Cardiac septum (tissue), 1 donor: ENCODE measurements at regions of chr1 and their contacts with region 1.

Region 1: DNA sequence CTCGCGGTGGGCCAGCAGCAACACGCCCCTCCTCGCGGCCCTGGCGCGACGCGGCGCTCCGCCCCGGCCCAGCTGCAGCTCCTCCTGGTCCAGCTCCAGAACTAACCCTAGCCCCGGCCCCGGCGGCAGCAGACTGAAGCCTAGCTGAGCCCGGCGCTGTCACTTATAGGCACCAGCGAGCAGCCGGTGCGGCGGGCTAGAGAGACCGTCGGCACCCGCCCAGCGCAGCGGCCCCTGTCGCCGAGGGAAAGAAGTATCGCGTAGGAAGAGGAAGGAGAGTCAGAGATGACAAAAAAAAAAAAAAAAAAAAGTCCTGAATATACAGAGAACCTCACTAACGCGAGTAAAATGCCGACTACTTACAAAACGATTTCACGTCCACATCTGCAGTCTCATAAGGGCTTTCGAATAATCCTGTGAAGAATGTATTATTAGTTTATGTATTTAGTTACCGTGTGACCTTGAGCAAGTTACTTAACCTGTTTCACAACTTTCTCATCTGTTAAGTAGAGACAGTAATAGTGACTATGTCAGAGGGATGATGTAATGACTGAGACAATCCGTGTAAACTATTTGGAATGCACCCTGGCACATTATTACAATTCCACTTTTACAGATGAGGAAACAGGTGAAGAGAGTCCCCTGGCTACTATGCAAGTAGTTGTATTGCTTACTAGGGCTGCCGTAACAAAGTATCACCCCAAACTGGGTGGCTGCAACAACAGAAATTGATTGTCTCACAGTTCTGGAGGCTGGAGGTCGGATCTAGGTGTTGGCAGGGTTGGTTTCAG is at the start of gene SLC9A1:
- DNase-seq: peak; percentile 98
- total RNA-seq, gene SLC9A1: 26.1 TPM

Region 2: DNA sequence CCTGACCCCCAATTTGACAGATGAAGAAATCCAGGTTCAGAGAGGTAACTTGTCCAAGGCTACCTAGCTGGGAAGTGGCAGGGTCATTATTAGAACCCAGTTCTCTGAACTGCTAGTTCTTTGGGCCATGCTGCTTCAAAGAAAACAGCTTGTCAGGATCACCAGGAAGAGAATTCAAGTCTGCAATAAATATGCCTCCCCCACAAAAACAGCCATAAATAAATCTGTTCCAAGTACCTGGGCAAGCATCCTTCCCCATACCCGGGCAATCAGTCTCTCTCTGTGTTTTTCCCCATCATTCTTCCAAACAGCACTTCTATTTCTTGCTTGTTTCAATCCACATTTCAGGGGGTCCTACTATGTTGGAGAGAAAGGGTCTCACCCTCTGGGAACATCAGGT is 34.3 kb before region 1 on chr1:
- intact Hi-C with region 1: loop called (anchors 2 kb)
- DNase-seq: no peak

Region 3: GRCh38 chr1:27235827-27236226 is 80.6 kb after region 1 on chr1:
- intact Hi-C with region 1: loop called (anchors 5 kb)
- DNase-seq: no peak